Heart right ventricle (tissue), 16 donors: ENCODE measurements at regions of chr7 and their contacts with region 1.

Region 1: GRCh38 chr7:37635346-37635745 is 48.2 kb upstream of the GPR141 start:
- DNase-seq: no peak
- ATAC-seq: no peak
- H3K4me3 ChIP-seq: no peak overlapping the region
- H3K27ac ChIP-seq: no peak overlapping the region
- H3K4me1 ChIP-seq: no peaks in the 10 kb centered on the region
- H3K27me3 ChIP-seq: no peaks in the 10 kb centered on the region
- CTCF ChIP-seq: no peak

Region 2: GRCh38 chr7:37698276-37698675 is 62.9 kb after region 1 on chr7:
- intact Hi-C with region 1: no loop called
- DNase-seq: no peak
- ATAC-seq: no peak
- H3K4me3 ChIP-seq: no peak overlapping the region
- H3K27ac ChIP-seq: no peak overlapping the region
- H3K4me1 ChIP-seq: peaks cover 0 to 44% (median 0%) of the 10 kb centered on the region in 9 donors
- H3K27me3 ChIP-seq: no peaks in the 10 kb centered on the region
- CTCF ChIP-seq: no peak

Region 3: GRCh38 chr7:37820708-37821468 is 185.5 kb after region 1 on chr7:
- intact Hi-C with region 1: loop called in 1 of 10 experiments (anchors 10 kb)
- DNase-seq: no peak
- ATAC-seq: no peak
- H3K4me3 ChIP-seq: no peak overlapping the region
- H3K27ac ChIP-seq: no peak overlapping the region
- H3K4me1 ChIP-seq: no peaks in the 10 kb centered on the region
- H3K27me3 ChIP-seq: no peaks in the 10 kb centered on the region
- CTCF ChIP-seq: no peak